Activated CD8-positive, alpha-beta T cell treated with anti-CD3 and anti-CD28 coated beads for 36 hours (primary cell): ENCODE measurements at regions of chr19 and their contacts with region 1.

Region 1: DNA sequence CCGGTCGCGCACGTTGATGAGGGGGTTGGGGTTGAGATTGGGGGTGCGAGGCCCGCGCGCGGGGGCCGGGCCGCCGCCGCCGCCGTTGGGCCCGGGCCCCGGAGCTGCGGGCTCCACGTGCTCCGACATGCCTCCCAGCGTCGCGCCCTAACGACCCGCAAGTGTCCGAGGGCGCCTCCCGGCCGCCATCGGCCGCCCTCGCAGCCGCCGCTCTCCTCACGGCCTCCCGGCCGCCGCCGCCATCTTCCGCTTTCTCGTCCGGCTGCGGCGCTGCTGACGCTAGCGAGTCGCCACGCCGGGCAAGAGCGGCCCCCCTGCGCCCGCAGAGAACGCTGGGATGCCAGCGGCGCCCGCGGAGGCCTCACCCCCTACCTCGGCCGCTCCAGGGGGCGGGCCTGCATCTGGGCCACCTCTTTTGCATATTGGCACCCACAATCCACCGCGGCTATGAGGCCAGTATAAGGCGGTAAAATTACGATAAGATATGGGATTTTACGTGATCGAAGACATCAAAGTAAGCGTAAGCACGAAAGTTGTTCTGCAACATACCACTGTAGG is at the start of gene TMEM259:
- DNase-seq: peak; percentile 98
- ATAC-seq: peak; percentile 88
- H3K4me3 Mint-ChIP-seq: peak within 1 kb of the TSS; percentile 96
- H3K27ac Mint-ChIP-seq: peak within 1 kb of the TSS; percentile 99
- H3K4me1 Mint-ChIP-seq: peaks cover 34% of the 10 kb centered on the region
- H3K27me3 Mint-ChIP-seq: no peaks in the 10 kb centered on the region
- CTCF ChIP-seq: no peak
- total RNA-seq, gene TMEM259: 115 to 117 TPM

Region 2: DNA sequence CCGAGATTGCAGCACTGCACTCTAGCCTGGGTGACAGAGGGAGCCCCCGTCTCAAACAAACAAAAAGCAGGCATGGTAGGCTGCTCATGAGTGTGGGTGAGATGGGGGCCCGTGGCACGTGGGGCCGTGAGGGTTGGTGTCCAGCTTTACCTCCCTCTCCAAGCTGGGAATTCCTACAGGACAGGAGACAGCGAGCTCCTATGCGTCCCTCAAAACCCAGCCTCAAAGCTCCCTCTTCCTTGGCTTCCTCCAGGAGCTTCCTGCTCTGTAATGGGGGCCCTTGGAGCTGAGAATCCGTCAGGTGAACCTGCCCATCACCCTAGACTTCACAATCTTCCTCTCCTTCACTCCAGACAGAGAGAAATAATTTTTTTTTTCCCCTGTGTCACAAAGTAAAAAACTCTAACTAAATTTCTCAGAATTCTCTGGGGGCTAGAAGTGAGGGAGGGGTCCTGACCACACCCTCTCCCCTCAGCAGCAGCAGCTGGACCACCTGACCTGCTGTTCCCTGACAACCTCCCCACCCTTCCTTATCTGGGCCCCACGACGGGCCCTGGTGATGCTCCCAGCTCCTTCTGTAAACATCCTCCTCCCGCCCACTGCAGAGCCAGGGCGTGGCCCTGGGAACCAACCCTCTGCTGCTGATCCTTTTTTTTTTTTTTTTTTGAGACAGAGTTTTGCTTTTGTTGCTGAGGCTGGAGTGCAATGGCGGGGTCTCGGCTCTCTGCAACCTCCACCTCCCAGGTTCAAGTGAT is 58.9 kb before region 1 on chr19:
- CTCF ChIA-PET with region 1: no interaction called
- POLR2A ChIA-PET with region 1: no interaction called
- intact Hi-C with region 1: no loop called
- DNase-seq: no peak
- ATAC-seq: no peak
- H3K4me3 Mint-ChIP-seq: no peak overlapping the region
- H3K27ac Mint-ChIP-seq: no peak overlapping the region
- H3K4me1 Mint-ChIP-seq: peaks cover 5% of the 10 kb centered on the region
- H3K27me3 Mint-ChIP-seq: no peaks in the 10 kb centered on the region
- CTCF ChIP-seq: no peak

Region 3: DNA sequence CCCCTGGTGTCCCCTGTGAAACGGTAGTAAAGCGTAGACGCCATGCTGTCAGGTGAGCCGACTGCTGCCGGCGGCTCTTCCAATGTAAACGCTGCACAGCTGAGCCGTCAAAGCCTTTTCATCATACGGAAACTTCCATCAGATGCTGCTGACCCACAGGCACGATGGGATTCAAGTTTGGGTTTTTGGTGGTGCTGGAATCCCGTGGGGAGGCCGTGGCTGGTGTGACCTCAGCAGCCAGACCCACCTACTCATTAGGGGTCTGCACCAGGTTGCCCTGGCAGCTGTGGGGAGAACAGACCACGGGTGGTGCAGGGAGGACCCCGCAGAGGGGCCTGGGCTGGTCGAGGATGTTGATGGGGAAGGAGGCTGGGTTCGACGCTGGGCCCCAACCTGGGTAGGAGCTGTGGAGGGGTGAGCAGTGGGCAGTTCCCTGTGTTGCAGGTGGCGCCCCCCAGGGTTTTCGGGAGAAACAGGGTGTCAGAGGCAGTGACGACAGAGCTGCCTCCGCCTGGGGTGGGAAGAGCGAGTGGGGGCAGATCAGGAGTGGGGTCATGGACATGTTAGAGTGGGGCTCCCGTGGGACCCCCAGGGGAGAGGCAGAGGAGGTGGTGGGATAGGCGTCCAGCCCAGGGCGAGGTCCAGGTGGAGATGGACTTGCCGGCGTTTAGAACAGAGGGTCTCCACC is 14.1 kb before region 1 on chr19:
- CTCF ChIA-PET with region 1: interaction called, 3 read pairs
- POLR2A ChIA-PET with region 1: interaction called, 13 read pairs
- intact Hi-C with region 1: no loop called
- DNase-seq: no peak
- ATAC-seq: no peak
- H3K4me3 Mint-ChIP-seq: no peak overlapping the region
- H3K27ac Mint-ChIP-seq: no peak overlapping the region
- H3K4me1 Mint-ChIP-seq: no peaks in the 10 kb centered on the region
- H3K27me3 Mint-ChIP-seq: peaks cover 3% of the 10 kb centered on the region
- CTCF ChIP-seq: no peak